Common myeloid progenitor, CD34-positive (primary cell): ENCODE measurements at regions of chr4 and their contacts with region 1.

Region 1: DNA sequence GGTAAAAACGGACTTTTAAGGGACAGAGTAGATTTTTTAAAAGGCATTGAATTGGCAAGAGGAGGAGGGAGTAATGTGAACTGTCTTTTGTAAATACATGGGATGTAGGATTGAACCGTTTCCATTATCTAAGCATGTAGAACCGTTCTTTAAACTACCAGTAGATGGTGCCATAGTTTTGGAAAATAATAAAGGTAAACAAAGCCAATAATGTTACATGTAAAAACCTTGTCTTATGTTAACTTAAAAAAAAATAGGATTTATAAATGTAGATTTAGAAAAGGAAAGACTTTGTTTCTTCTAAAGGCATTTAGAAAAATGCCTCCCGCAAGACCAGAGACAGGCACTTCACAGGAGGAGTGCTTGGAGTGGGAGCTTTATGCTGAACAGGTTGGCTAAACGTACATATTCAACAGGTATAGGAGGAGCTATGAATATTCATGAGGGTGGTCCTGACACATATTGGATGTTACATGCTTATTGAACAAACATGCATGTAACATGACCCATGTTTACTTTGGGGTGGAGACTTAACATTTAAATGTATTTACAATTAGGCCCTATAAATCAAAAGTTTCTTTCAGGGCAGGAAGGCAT is 45.5 kb upstream of the FAM241A start:
- DNase-seq: peak; percentile 60 to 71 (median 67)
- H3K4me3 ChIP-seq: no peak overlapping the region
- H3K27ac ChIP-seq: no peak overlapping the region
- H3K4me1 ChIP-seq: peaks cover 0 to 4% (median 0%) of the 10 kb centered on the region in 4 experiments
- H3K27me3 ChIP-seq: no peaks in the 10 kb centered on the region

Region 2: DNA sequence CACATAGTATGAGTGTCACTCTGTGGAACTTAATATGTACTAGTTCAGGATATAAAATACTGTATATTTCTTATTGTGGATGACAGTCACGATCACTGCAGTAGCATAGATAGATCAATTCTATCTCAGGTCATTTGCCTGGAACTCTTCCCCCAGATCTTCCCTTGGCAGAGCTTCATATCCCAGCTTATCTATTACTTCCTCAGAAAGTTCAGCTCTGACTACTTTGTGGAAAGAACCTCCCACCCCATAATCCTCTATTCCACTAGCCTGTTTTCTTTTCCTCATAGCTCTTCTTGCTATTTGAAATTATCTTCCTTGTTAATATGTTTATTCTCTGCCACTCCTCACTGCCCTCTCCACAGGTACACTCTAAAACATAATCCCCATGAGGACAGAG is 56.3 kb after region 1 on chr4:
- CTCF ChIA-PET with region 1: interaction called, 10 read pairs
- POLR2A ChIA-PET with region 1: no interaction called
- DNase-seq: no peak
- H3K4me3 ChIP-seq: no peak overlapping the region
- H3K27ac ChIP-seq: peak overlapping the region; percentile 4 to 21
- H3K4me1 ChIP-seq: peaks cover 3 to 36% (median 15%) of the 10 kb centered on the region in 4 experiments
- H3K27me3 ChIP-seq: no peaks in the 10 kb centered on the region

Region 3: DNA sequence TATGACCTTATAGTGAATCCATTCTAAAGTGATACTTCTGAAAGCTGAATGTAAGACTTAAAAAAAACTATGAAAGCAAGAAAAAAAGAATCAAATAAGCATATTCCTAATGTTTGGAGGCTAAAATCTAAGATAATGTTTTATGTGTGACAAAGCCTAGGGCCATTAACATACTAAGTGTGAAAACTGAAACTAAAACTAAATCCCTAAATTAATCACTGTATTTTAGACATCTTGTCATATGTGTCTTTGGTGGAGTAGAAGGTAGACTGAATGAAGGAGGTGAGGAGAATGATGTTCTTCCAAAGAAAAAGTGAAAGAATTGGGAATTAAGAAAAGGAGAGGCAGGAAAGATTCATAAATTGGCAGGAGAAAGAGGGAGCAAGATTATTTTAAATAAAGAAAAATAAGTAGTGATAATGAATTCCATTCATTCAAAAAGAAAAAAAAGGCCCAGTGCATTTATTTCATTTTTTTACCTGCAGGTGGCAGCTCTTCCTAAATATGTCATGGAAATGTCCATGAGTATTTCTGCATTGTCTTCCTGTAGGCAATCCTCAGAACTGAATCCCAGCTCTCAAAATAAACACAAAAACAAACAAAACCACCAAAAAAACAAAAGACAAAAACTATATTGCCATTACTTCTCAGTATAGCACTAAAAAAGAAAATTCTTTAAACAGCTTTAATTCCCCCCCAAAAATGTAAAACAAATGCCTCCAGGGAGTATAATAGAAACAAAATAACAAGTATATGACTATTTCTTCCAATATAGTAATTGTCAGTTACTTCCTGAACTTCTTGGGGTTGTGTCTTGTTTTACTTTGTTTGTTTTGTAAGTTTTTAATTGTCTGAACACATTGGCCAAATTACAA is 114.8 kb after region 1 on chr4:
- CTCF ChIA-PET with region 1: interaction called, 10 read pairs
- POLR2A ChIA-PET with region 1: no interaction called
- DNase-seq: peak; percentile 29 to 48 (median 44)
- H3K4me3 ChIP-seq: no peak overlapping the region
- H3K27ac ChIP-seq: no peak overlapping the region
- H3K4me1 ChIP-seq: no peaks in the 10 kb centered on the region
- H3K27me3 ChIP-seq: no peaks in the 10 kb centered on the region

Region 4: GRCh38 chr4:112231779-112232713 is 132.2 kb after region 1 on chr4 and contains the start of gene AP1AR:
- CTCF ChIA-PET with region 1: interaction called, 126 read pairs
- POLR2A ChIA-PET with region 1: no interaction called
- DNase-seq: peak; percentile 87 to 91 (median 90)
- H3K4me3 ChIP-seq: peak within 1 kb of the TSS; percentile 77 to 95 (median 89)
- H3K27ac ChIP-seq: peak within 1 kb of the TSS; percentile 79 to 92
- H3K4me1 ChIP-seq: peaks cover 5 to 25% (median 15%) of the 10 kb centered on the region in 4 experiments
- H3K27me3 ChIP-seq: no peaks in the 10 kb centered on the region

Region 5: DNA sequence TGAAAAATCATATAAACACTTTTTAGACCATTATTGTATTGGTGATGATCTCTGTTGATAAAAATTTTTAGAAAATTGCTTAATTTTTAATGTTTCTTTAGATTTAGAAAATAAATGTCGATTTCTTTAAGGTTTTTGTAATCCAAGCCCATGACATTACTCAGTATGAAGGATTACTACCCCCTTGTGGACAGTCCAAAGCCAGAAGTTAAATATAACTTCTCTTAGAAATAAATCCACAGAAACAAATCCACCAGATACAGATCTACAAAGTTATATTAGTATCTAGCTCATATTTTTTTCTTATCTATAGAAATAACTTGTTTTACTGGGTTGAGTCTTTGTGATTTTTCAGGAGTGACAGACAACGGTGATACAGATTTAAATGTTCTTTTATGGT is 167.0 kb after region 1 on chr4:
- CTCF ChIA-PET with region 1: interaction called, 47 read pairs
- POLR2A ChIA-PET with region 1: no interaction called
- DNase-seq: peak; percentile 44 to 74 (median 67)
- H3K4me3 ChIP-seq: no peak overlapping the region
- H3K27ac ChIP-seq: no peak overlapping the region
- H3K4me1 ChIP-seq: no peaks in the 10 kb centered on the region
- H3K27me3 ChIP-seq: no peaks in the 10 kb centered on the region